AG04449 (cell line): ENCODE measurements at regions of chr5 and their contacts with region 1.

Region 1: DNA sequence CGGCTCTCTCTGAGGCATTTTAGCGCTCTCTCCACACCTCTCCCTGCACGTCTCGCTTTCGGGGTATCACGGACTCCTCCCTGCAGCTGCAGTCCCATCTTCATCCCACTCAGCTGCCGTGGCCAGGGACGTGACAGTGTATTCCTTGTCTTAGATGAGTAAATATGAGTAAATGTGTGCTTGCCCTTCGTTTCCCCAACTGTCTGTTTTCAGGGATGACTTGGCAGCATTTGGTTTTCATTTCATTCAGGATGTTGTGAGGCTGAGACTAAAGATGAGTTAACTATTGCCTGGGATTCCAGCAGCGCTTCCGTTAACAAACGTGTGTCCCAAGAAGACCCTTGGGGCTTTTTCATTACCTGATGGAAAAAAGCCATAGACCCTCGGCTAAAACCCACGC is 29.5 kb downstream of the GDNF start:
- DNase-seq: no peak
- H3K4me3 ChIP-seq: peak overlapping the region; percentile 50
- CTCF ChIP-seq: no peak

Region 2: GRCh38 chr5:37738057-37738691 is 72.1 kb before region 1 on chr5:
- CTCF ChIA-PET with region 1: no interaction called
- POLR2A ChIA-PET with region 1: interaction called, 12 read pairs
- DNase-seq: peak; percentile 85
- H3K4me3 ChIP-seq: no peak overlapping the region
- CTCF ChIP-seq: no peak